ENCODE measurements at regions of chr2 and their contacts with region 1.

Region 1: DNA sequence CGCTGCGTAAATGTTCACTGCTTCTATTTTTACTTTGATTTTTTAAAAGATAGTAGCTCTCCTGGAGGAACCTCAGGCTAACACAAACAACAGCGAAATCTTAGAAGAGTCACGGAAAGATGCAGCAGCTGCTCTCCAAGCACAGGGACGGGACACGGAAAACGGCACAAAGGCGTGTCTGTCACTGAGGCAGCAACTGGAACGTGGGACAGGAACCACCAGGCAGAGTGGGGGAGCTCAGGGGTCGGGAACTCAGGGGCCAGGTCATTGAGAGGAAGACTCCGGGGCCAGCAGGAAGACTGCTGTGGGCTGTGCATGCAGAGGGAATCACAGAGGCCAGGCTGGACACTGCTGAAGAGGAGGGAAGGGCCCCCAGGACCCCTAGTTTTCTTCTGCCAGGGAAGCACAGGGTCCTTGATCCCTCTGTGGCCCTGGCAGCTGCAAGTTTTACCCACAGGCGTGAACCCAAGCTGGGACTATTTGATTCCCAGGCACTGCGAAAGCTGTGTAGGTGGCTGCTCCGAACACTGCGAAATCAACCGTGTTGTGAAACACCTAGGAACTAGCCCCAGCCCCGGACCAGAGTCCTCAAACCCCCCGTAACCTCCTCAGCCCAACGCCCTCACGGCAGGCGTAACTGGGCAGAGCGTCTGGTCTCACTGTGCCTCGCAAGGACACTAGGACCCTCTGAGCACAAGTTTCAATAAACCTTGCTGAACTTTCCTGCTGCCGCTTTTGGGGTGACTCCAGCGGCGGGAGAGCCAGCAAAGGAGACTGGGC is 263.0 kb downstream of the EIPR1 start:
- DNase-seq: peak in 1 of 2 donors; percentile 12
- H3K4me3 ChIP-seq: no peak overlapping the region
- H3K27ac ChIP-seq: no peak overlapping the region
- H3K4me1 ChIP-seq: no peaks in the 10 kb centered on the region
- H3K27me3 ChIP-seq: no peaks in the 10 kb centered on the region
- CTCF ChIP-seq: no peak
- POLR2A ChIP-seq: no peak

Region 2: DNA sequence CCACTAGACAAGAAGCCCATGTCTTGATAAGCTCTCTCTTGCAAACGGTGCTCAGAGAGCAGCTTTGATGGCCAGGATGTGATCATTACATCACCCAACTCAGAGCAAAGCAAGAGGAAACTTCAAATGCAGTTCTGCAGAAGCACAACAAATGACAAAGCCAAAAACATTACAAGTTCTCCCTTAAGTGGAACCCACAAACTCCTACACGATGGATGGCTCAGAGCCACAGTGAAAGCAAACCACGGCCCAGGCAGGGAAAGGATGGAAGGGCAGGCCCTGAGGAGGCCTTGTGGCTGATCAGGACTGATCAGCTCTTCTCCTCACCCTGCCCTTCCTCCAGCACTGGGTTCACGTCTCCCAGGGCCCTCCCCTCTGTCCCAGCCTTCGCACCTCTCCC is 63.3 kb before region 1 on chr2:
- intact Hi-C with region 1: no loop called
- DNase-seq: no peak
- H3K4me3 ChIP-seq: no peak overlapping the region
- H3K27ac ChIP-seq: no peak overlapping the region
- H3K4me1 ChIP-seq: no peaks in the 10 kb centered on the region
- H3K27me3 ChIP-seq: no peaks in the 10 kb centered on the region
- CTCF ChIP-seq: no peak
- POLR2A ChIP-seq: no peak

Region 3: GRCh38 chr2:3745920-3746319 is 631.3 kb after region 1 on chr2:
- intact Hi-C with region 1: loop called (anchors 5 kb)
- DNase-seq: no peak
- H3K4me3 ChIP-seq: no peak overlapping the region
- H3K27ac ChIP-seq: no peak overlapping the region
- H3K4me1 ChIP-seq: no peaks in the 10 kb centered on the region
- H3K27me3 ChIP-seq: no peaks in the 10 kb centered on the region
- CTCF ChIP-seq: no peak
- POLR2A ChIP-seq: no peak

Measured in breast epithelium (tissue), 4 donors.